Natural killer cell (primary cell): ENCODE measurements at regions of chr1 and their contacts with region 1.

Region 1: GRCh38 chr1:35769759-35770446 is at the start of gene CLSPN:
- DNase-seq: peak; percentile 92 to 95
- ATAC-seq: peak; percentile 91 to 97 (median 92)
- H3K4me3 ChIP-seq: peak within 1 kb of the TSS; percentile 86
- H3K4me3 Mint-ChIP-seq: peak within 1 kb of the TSS; percentile 99
- H3K27ac ChIP-seq: peak within 1 kb of the TSS; percentile 87
- H3K27ac Mint-ChIP-seq: peak within 1 kb of the TSS; percentile 88 to 93
- H3K4me1 ChIP-seq: peaks cover 12% of the 10 kb centered on the region
- H3K4me1 Mint-ChIP-seq: peaks cover 5 to 11% of the 10 kb centered on the region in 2 donors
- H3K27me3 ChIP-seq: no peaks in the 10 kb centered on the region
- H3K27me3 Mint-ChIP-seq: no peaks in the 10 kb centered on the region
- CTCF ChIP-seq: no peak
- total RNA-seq, gene CLSPN: 1.9 to 4.9 (median 2.4) TPM

Region 2: GRCh38 chr1:34786521-34787325 is 983.2 kb before region 1 on chr1:
- intact Hi-C with region 1: loop called (anchors 5 kb)
- DNase-seq: peak; percentile 45 to 81
- ATAC-seq: peak; percentile 79 to 94 (median 89)
- H3K4me3 ChIP-seq: no peak overlapping the region
- H3K4me3 Mint-ChIP-seq: no peak overlapping the region
- H3K27ac ChIP-seq: no peak overlapping the region
- H3K27ac Mint-ChIP-seq: no peak overlapping the region
- H3K4me1 ChIP-seq: peaks cover 9% of the 10 kb centered on the region
- H3K4me1 Mint-ChIP-seq: peaks cover 0 to 7% of the 10 kb centered on the region in 2 donors
- H3K27me3 ChIP-seq: peaks cover 10% of the 10 kb centered on the region
- H3K27me3 Mint-ChIP-seq: peaks cover 29 to 33% of the 10 kb centered on the region in 2 donors
- CTCF ChIP-seq: peak; percentile 73

Region 3: GRCh38 chr1:35451125-35451528 is 318.8 kb before region 1 on chr1:
- intact Hi-C with region 1: loop called (anchors 1 kb)
- DNase-seq: peak; percentile 60 to 88
- ATAC-seq: peak; percentile 86 to 98 (median 97)
- H3K4me3 ChIP-seq: no peak overlapping the region
- H3K4me3 Mint-ChIP-seq: no peak overlapping the region
- H3K27ac ChIP-seq: no peak overlapping the region
- H3K27ac Mint-ChIP-seq: peak overlapping the region in 1 of 2 donors; percentile 12
- H3K4me1 ChIP-seq: no peaks in the 10 kb centered on the region
- H3K4me1 Mint-ChIP-seq: peaks cover 5 to 6% of the 10 kb centered on the region in 2 donors
- H3K27me3 ChIP-seq: no peaks in the 10 kb centered on the region
- H3K27me3 Mint-ChIP-seq: no peaks in the 10 kb centered on the region
- CTCF ChIP-seq: peak; percentile 79

Region 4: DNA sequence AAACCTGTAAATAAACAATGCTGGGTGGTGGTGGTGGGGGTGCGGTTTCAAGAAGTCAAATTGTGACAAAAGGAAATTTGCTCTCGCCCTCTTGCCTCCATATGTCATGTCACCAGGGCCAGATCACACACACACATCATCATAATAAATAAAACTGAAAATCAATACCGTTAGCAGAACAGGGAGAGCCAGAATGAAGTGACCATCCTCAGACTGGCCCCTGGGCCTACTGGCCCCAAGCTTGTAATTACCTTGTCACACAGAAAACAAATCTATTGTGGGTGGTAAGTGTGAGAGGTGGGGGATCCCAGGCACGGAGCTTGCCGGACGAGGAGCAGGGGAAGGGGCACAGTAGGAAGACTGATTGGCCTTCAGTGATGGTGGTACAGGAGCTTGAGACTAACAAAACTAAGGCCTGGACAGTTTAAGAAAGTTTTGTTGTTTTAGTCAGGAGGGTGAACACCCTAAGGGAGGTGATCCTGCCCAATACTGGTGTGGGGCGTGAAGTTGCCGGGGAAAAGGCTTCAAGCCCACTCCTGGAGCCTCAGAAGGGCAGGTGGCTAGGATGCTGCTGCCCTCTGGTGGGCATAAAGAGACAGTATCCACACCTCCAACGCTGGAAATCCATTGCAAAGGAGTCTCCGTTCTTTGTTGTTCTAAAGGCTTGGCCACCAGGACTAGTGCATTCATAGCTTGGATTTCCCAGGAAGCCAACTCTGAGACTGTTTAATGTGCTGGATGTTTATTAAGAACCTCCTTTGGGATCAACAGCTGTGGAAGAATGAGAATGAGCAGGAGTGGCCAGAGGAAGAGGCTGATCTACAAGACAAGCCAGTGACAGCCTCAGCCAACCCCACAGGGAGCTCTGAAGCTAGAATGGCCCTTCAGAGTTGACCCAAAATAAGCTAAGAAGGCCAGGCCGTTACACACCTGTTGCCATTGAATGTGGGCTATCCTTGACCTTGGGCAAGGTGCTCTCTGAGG is 43.2 kb before region 1 on chr1:
- intact Hi-C with region 1: loop called (anchors 5 kb)
- DNase-seq: peak; percentile 44 to 83
- ATAC-seq: peak; percentile 79 to 97 (median 93)
- H3K4me3 ChIP-seq: no peak overlapping the region
- H3K4me3 Mint-ChIP-seq: no peak overlapping the region
- H3K27ac ChIP-seq: no peak overlapping the region
- H3K27ac Mint-ChIP-seq: peak overlapping the region in 1 of 2 donors; percentile 47
- H3K4me1 ChIP-seq: peaks cover 5% of the 10 kb centered on the region
- H3K4me1 Mint-ChIP-seq: peaks cover 6 to 7% of the 10 kb centered on the region in 2 donors
- H3K27me3 ChIP-seq: no peaks in the 10 kb centered on the region
- H3K27me3 Mint-ChIP-seq: no peaks in the 10 kb centered on the region
- CTCF ChIP-seq: peak; percentile 94

Region 5: GRCh38 chr1:36109041-36109679 is 339.3 kb after region 1 on chr1:
- intact Hi-C with region 1: no loop called
- DNase-seq: peak in 1 of 2 donors; percentile 70
- ATAC-seq: peak; percentile 36 to 80 (median 66)
- H3K4me3 ChIP-seq: no peak overlapping the region
- H3K4me3 Mint-ChIP-seq: no peak overlapping the region
- H3K27ac ChIP-seq: no peak overlapping the region
- H3K27ac Mint-ChIP-seq: peak overlapping the region in 1 of 2 donors; percentile 58
- H3K4me1 ChIP-seq: peaks cover 12% of the 10 kb centered on the region
- H3K4me1 Mint-ChIP-seq: peaks cover 5 to 12% of the 10 kb centered on the region in 2 donors
- H3K27me3 ChIP-seq: no peaks in the 10 kb centered on the region
- H3K27me3 Mint-ChIP-seq: peaks cover 0 to 3% of the 10 kb centered on the region in 2 donors
- CTCF ChIP-seq: no peak